ENCODE measurements at regions of chr3 and their contacts with region 1.

Region 1: DNA sequence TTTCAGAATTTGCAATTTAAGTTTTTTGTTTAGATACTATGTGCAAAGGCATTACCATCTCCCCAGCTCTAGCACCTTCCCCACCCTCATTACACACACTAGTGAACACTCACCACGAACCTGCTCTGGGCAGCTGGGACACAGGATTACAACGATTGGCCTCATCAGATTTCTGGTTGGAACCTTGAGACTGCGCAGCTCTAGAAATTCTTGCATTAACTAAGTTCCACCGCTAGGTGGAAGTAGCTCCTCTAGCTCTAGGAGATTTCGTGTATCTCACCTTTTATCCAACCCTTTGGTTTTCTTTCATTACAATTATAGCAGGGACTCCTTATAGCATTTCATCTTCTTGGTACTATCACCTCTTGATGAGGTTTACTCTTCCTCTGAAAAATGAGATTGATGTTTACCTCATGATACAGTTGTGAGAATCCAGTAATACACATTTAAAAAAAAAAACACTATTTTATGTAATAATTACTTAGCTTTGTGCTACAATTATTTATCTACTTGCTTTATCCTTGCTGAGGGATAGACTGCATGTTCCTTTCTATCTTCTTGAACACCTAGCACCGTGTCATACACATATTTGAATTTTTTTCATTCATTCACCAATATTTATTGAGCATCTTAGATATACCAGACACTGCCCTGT is 28.7 kb upstream of the PLOD2 start:
- DNase-seq: peak; percentile 5
- H3K4me3 Mint-ChIP-seq: no peak overlapping the region
- H3K27ac Mint-ChIP-seq: no peak overlapping the region
- H3K4me1 Mint-ChIP-seq: no peaks in the 10 kb centered on the region
- H3K27me3 Mint-ChIP-seq: peaks cover 15% of the 10 kb centered on the region

Region 2: GRCh38 chr3:145754605-145755289 is 434.9 kb before region 1 on chr3:
- CTCF ChIA-PET with region 1: no interaction called
- intact Hi-C with region 1: no loop called
- DNase-seq: no peak
- H3K4me3 Mint-ChIP-seq: no peak overlapping the region
- H3K27ac Mint-ChIP-seq: no peak overlapping the region
- H3K4me1 Mint-ChIP-seq: no peaks in the 10 kb centered on the region
- H3K27me3 Mint-ChIP-seq: no peaks in the 10 kb centered on the region

Region 3: DNA sequence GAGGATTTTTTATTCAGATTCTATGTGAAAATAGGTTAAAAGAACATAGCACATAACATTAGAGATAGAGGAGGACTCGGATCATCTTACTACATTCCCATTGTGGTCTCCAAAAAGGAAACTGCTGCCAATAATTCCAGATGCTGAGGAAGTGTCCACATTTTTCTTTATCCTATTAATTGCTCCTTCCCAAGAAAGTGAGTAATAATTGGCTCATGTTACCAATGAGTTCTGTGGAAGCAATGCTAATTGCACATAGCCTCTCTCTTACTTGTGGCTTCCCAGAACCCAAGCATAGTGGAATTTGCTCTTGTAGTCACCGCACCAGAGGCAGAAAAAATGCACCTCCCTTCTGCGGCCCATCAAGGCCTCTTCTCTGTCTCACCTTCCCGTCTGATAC is 237.1 kb before region 1 on chr3:
- CTCF ChIA-PET with region 1: no interaction called
- intact Hi-C with region 1: no loop called
- DNase-seq: no peak
- H3K4me3 Mint-ChIP-seq: no peak overlapping the region
- H3K27ac Mint-ChIP-seq: no peak overlapping the region
- H3K4me1 Mint-ChIP-seq: no peaks in the 10 kb centered on the region
- H3K27me3 Mint-ChIP-seq: no peaks in the 10 kb centered on the region

Region 4: DNA sequence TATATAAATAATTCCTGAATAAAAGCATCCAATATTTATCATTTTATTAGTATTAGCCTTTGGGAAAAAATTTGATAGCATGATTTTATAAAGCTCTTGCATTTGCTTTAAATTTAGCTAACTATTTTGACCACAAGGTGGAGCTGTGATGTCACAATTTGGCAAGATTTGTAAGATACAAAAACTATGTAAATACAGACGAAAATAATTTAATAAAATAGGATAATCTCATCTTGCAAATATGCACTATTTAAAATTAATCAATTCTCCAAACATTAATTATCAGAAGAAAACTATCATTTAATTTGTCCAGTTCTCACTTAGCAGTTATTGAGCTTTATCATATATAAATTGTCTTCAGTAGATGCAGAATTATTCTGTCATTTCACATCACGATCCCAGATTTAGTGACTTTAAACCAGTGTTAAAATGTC is 124.1 kb before region 1 on chr3:
- CTCF ChIA-PET with region 1: interaction called, 43 read pairs
- intact Hi-C with region 1: loop called (anchors 1 kb)
- DNase-seq: peak; percentile 26
- H3K4me3 Mint-ChIP-seq: no peak overlapping the region
- H3K27ac Mint-ChIP-seq: no peak overlapping the region
- H3K4me1 Mint-ChIP-seq: no peaks in the 10 kb centered on the region
- H3K27me3 Mint-ChIP-seq: no peaks in the 10 kb centered on the region

Region 5: GRCh38 chr3:146326670-146327543 is 137.3 kb after region 1 on chr3:
- CTCF ChIA-PET with region 1: interaction called, 10 read pairs
- intact Hi-C with region 1: loop called (anchors 1 kb)
- DNase-seq: no peak
- H3K4me3 Mint-ChIP-seq: no peak overlapping the region
- H3K27ac Mint-ChIP-seq: no peak overlapping the region
- H3K4me1 Mint-ChIP-seq: no peaks in the 10 kb centered on the region
- H3K27me3 Mint-ChIP-seq: peaks cover 6% of the 10 kb centered on the region

Region 6: GRCh38 chr3:146589899-146590508 is 400.4 kb after region 1 on chr3:
- CTCF ChIA-PET with region 1: no interaction called
- intact Hi-C with region 1: loop called (anchors 1 kb)
- DNase-seq: peak; percentile 49
- H3K4me3 Mint-ChIP-seq: no peak overlapping the region
- H3K27ac Mint-ChIP-seq: no peak overlapping the region
- H3K4me1 Mint-ChIP-seq: no peaks in the 10 kb centered on the region
- H3K27me3 Mint-ChIP-seq: peaks cover 6% of the 10 kb centered on the region